ENCODE measurements at regions of chr5 and their contacts with region 1.

Region 1: GRCh38 chr5:95846554-95847260 is 24.2 kb upstream of the GLRX start:
- DNase-seq: peak; percentile 75
- CTCF ChIP-seq: peak; percentile 88

Region 2: GRCh38 chr5:95646554-95647431 is 199.9 kb before region 1 on chr5 and contains the start of gene RFESD:
- CTCF ChIA-PET with region 1: interaction called, 23 read pairs
- POLR2A ChIA-PET with region 1: no interaction called
- DNase-seq: peak; percentile 93
- CTCF ChIP-seq: no peak

Region 3: DNA sequence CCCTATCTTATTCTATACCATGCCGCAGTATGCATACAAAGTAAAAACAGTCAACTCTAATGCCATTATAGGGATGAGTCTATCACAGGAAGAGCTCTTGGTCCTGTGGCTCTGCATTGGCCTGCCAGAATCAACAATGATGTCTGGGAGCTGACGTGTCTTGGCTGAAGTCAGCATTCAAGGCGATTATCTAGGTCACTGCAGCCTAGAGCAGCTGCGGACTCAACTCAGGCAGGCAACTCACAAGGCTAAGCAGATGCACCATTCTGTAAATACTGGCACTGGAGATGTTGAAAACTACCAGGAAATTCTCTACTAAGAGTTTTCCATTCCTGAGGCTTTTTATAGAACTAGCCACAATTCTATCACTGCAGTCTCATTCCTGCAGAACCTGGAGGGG is 177.2 kb before region 1 on chr5:
- CTCF ChIA-PET with region 1: interaction called, 20 read pairs
- POLR2A ChIA-PET with region 1: no interaction called
- DNase-seq: no peak
- CTCF ChIP-seq: no peak

Region 4: DNA sequence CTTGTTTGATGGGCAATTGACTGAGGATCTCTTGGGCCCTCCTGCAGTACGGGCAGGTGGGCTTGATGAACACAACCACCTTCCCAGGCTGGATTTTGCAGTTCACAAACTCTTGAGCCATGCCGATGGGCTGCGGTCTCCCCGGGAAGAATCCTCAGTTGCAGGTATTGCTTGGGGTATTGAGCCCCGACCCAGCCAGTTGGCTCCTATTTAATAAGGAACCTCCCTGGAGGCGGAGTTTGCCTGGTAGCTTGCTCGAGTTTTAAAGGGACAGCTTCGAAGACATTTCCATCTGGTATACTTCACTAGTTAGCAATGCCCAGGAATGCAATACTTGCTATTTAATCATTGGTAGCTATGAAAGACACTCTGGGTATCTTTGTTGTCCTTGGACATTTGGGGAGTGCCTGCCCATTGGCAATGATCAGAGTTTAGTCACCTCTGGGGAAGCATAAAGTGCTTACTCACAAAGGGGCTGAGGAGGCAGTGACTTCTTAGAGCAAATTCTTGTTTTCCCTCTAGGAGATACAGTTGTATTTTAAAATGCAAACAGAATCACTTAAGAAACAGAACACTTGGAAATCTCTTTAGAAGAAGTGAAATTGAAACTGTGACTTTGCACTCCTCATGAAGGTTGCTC is 24.0 kb before region 1 on chr5 and contains the start of gene GLRX:
- CTCF ChIA-PET with region 1: interaction called, 12 read pairs
- POLR2A ChIA-PET with region 1: no interaction called
- DNase-seq: peak; percentile 58
- CTCF ChIP-seq: no peak

Region 5: DNA sequence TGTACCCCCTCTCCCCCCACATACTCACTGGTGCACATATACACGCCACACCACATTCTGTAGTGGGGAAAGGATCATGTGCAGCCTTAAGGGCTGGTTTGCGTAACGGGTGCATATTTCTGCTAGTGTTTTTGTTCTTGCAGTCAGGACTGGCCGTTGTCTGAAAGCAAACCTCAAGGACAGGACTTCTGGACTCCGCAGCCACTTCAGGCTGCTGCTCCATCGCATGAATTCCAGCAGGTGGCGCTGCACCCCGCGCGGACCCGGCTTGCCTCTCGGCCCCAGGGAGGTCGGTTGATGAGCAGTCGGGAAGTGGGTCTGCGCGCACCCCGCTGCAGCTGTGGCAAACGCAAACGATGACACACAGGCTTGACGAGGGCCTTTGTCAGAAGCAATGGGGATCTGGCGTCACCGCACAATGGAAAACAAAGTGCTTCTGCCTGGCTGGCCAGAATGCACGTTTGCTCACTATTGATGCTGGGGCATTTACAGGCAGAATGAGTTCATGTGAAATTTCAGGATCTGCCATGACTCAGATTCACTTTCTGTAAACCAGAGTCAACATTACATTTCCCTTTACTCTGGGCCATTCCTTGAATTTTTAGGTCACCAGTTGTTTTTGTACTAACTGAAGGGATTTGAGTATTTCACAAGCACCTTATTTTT is 12.1 kb after region 1 on chr5:
- CTCF ChIA-PET with region 1: interaction called, 80 read pairs
- POLR2A ChIA-PET with region 1: no interaction called
- DNase-seq: peak; percentile 89
- CTCF ChIP-seq: peak; percentile 98

Measured in GM10248 (cell line).